Tibial artery (tissue), 4 donors: ENCODE measurements at regions of chr16 and their contacts with region 1.

Region 1: DNA sequence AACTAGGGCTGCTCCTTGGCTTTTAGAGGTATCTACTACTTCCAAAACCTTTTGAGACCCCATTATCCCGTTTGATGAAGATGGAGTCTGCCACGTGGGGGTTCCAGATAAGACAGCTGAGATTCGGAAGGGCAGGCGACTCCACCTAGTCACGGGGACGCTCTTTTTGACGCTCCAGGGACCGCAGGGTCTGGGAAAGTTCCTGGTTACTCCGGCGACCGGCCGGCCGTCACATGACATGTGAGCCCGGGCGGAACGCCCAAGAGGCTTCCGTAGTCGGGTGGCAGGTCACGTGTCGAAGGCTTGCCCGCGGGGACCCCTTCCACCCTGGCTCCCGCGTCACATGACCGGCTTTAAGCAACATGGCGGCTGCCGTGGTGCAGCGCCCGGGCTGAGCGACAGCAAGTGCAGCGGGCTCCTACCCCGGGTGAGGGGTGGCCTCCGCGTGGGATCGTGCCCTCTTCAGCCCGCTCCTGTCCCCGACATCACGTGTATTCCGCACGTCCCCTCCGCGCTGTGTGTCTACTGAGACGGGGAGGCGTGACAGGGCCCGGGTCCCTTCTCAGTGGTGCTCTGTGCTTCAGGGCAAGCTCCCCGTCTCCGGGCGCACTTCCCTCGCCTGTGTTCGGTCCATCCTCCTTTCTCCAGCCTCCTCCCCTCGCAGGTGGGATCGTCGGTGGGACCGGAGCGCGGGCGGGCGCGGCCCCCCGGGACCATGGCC is at the start of gene SPNS1:
- DNase-seq: peak; percentile 97 to 98
- H3K4me3 ChIP-seq: peak within 1 kb of the TSS; percentile 76 to 84
- H3K27ac ChIP-seq: peak within 1 kb of the TSS; percentile 83 to 87
- H3K4me1 ChIP-seq: peaks cover 0 to 21% (median 18%) of the 10 kb centered on the region in 4 donors
- H3K27me3 ChIP-seq: no peaks in the 10 kb centered on the region
- CTCF ChIP-seq: peak in 1 of 2 experiments; percentile 27

Region 2: GRCh38 chr16:28910086-28911031 is 64.2 kb before region 1 on chr16:
- intact Hi-C with region 1: loop called (anchors 10 kb)
- DNase-seq: no peak
- H3K4me3 ChIP-seq: no peak overlapping the region
- H3K27ac ChIP-seq: no peak overlapping the region
- H3K4me1 ChIP-seq: no peaks in the 10 kb centered on the region
- H3K27me3 ChIP-seq: no peaks in the 10 kb centered on the region
- CTCF ChIP-seq: no peak